ENCODE measurements at regions of chr13 and their contacts with region 1.

Region 1: GRCh38 chr13:27620377-27621115 is at the start of gene LNX2:
- DNase-seq: peak; percentile 95
- ATAC-seq: peak; percentile 96
- H3K4me3 ChIP-seq: peak within 1 kb of the TSS; percentile 99
- H3K27ac ChIP-seq: peak within 1 kb of the TSS; percentile 61
- H3K4me1 ChIP-seq: no peaks in the 10 kb centered on the region
- H3K27me3 ChIP-seq: no peaks in the 10 kb centered on the region
- CTCF ChIP-seq: no peak
- POLR2A ChIP-seq: no peak
- RAD21 ChIP-seq: no peak
- total RNA-seq, gene LNX2: 7.2 and 7.8 TPM in 2 replicates

Region 2: DNA sequence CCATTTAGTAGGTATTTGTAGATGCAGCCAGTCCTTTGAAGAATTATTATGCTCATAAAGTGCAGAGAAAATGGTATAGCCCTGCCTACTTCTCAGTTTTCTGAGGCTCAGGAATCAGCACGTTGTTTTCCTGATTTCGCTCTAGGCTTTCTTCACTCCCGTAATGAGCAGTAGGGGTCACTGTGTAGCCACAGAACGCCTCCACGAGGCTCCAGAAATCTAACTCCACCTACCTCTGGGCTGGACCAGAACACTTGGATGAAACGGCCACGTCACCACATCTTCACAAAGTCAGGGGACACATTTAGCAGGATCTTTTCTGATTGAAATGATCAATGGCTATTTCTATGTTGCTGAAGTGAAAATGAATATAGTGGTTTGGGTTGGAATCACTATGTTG is 245.9 kb before region 1 on chr13:
- CTCF ChIA-PET with region 1: no interaction called
- POLR2A ChIA-PET with region 1: no interaction called
- dilution Hi-C with region 1: no loop called
- in situ Hi-C with region 1: no loop called
- intact Hi-C with region 1: loop called (anchors 10 kb)
- DNase-seq: peak; percentile 88
- ATAC-seq: peak; percentile 98
- H3K4me3 ChIP-seq: no peak overlapping the region
- H3K27ac ChIP-seq: no peak overlapping the region
- H3K4me1 ChIP-seq: no peaks in the 10 kb centered on the region
- H3K27me3 ChIP-seq: peaks cover 22% of the 10 kb centered on the region
- CTCF ChIP-seq: peak; percentile 89
- POLR2A ChIP-seq: no peak
- RAD21 ChIP-seq: peak; percentile 82

Region 3: DNA sequence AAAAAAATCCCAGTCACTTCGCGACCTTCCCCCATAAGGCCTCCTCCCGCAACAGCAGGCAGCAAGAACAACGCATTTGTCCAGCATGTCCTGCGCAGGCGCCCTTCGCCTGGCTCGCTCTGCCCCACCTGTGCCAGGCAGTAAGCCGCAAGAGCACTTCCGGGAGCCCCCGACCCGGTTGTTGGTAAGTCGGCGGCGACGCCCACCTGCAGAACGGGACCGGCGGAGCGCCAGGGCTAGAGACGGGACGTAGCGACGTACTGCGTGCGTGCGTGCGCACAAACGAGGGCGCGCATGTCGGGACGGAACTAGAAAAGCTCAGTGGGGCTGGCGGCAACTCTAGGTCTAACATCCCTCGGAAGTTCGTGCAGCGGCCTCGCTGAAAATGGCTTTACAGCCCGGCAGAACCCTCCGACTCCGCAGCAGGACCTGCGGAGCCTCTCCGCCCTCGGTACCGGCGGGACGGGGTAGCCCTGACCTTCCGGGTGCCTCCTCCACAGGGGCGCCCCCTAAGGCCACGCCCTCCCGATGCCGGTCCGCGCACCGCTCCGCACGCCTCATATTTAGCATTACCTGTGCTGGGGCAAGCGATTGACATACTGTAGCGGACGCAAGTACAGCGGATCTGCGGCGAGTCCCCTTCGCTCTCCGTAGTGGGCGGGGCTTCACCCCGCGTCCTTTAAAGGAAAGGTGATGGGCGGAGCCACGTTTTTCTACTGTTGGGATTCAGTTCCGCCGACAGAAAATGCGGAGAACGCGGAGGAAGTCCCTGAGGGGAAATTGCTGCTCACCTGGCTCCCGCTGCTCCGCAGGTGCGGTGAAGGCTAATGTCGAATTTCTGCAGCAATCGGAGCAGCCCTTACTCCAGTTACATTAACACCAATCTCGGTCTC is 170.4 kb before region 1 on chr13 and contains the start of gene MTIF3:
- CTCF ChIA-PET with region 1: no interaction called
- POLR2A ChIA-PET with region 1: no interaction called
- dilution Hi-C with region 1: no loop called
- in situ Hi-C with region 1: no loop called
- intact Hi-C with region 1: loop called (anchors 1 kb)
- DNase-seq: peak; percentile 90
- ATAC-seq: peak; percentile 96
- H3K4me3 ChIP-seq: peak within 1 kb of the TSS; percentile 74
- H3K27ac ChIP-seq: peak within 1 kb of the TSS; percentile 89
- H3K4me1 ChIP-seq: peaks cover 4% of the 10 kb centered on the region
- H3K27me3 ChIP-seq: no peaks in the 10 kb centered on the region
- CTCF ChIP-seq: no peak
- POLR2A ChIP-seq: peak; percentile 56
- RAD21 ChIP-seq: no peak
- total RNA-seq, gene MTIF3: 31.7 and 60.8 TPM in 2 replicates

Region 4: DNA sequence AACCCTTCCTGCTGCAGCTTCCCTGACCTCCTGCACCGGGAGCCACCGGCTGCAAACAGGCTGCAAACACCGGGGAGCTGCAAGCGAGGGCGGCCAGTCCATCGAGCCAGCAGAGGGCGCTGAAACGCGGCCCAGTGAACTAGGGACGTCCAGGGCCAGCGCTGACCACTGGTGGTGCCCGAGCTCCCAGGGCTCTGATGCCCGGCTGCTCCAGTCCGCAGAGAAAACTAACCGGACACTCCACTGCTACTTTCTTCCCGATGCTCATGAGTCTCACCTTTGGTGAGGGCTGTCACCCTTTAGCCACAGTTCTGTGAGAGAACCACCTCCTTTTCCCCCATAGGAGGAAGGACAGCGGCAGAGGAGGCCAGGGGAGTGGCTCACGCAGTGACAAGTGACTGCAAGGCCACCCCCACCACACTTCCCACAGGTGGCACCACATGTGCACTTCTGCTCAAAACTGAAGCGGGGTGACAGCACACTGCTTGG is 87.3 kb before region 1 on chr13:
- CTCF ChIA-PET with region 1: interaction called, 10 read pairs
- POLR2A ChIA-PET with region 1: no interaction called
- dilution Hi-C with region 1: no loop called
- in situ Hi-C with region 1: no loop called
- intact Hi-C with region 1: loop called (anchors 1 kb)
- DNase-seq: peak; percentile 59
- ATAC-seq: peak; percentile 100
- H3K4me3 ChIP-seq: no peak overlapping the region
- H3K27ac ChIP-seq: no peak overlapping the region
- H3K4me1 ChIP-seq: no peaks in the 10 kb centered on the region
- H3K27me3 ChIP-seq: peaks cover 4% of the 10 kb centered on the region
- CTCF ChIP-seq: peak; percentile 94
- POLR2A ChIP-seq: 0 out of 2 replicates have a peak, but pooled peaks have one; percentile 32
- RAD21 ChIP-seq: peak; percentile 84

Region 5: DNA sequence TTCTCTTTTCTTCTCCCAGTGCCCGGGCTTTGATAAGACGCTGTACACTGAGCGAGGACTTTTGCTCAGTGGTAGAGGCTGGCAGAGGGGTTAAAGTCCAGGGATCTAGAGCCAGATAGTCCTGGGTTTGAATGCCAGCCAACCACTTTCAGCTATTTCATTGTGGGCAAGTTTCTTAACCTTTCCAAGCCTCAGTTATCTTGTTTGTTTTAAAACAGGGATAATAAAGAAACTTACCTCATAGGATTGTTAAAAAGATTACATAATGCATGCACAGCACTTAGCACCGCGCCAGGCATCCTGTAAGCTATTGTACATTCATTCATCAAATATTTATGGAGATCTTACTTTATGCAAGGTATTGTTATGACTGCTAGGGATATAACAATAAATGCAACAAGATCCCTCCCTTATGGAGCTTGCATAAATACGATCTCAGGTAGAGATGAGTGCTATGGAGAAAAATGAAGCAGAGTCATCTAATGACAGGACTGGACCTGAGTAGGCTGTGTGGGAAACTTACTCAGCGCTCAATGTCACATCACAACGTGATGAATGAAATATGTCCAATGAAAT is 71.1 kb before region 1 on chr13:
- CTCF ChIA-PET with region 1: no interaction called
- POLR2A ChIA-PET with region 1: no interaction called
- dilution Hi-C with region 1: no loop called
- in situ Hi-C with region 1: no loop called
- intact Hi-C with region 1: no loop called
- DNase-seq: no peak
- ATAC-seq: no peak
- H3K4me3 ChIP-seq: no peak overlapping the region
- H3K27ac ChIP-seq: no peak overlapping the region
- H3K4me1 ChIP-seq: no peaks in the 10 kb centered on the region
- H3K27me3 ChIP-seq: no peaks in the 10 kb centered on the region
- CTCF ChIP-seq: no peak
- POLR2A ChIP-seq: no peak
- RAD21 ChIP-seq: no peak

Region 6: GRCh38 chr13:27588405-27588804 is 32.1 kb before region 1 on chr13:
- CTCF ChIA-PET with region 1: no interaction called
- POLR2A ChIA-PET with region 1: no interaction called
- dilution Hi-C with region 1: no loop called
- in situ Hi-C with region 1: no loop called
- intact Hi-C with region 1: loop called (anchors 1 kb)
- DNase-seq: no peak
- ATAC-seq: no peak
- H3K4me3 ChIP-seq: no peak overlapping the region
- H3K27ac ChIP-seq: no peak overlapping the region
- H3K4me1 ChIP-seq: peaks cover 3% of the 10 kb centered on the region
- H3K27me3 ChIP-seq: no peaks in the 10 kb centered on the region
- CTCF ChIP-seq: no peak
- POLR2A ChIP-seq: no peak
- RAD21 ChIP-seq: no peak

Region 7: DNA sequence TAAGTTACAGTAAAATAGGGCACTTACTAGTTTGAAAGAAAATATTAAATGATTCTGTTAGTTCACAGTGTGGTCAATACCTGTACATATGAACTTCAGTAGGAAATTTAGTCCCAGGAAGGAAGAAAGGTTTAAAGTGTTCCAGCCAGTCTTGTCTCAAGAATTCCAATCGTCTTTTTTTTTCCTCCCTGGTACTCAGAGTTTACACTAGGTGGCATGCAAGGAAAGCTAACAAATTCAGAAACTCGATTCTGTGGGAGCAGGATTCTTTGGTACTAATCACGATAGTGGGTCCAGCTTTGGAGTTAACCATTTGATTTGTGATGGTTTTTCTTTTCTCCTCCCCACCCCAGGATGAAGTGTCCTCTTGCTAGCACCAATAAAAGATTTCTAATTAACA is 44.8 kb after region 1 on chr13:
- CTCF ChIA-PET with region 1: no interaction called
- POLR2A ChIA-PET with region 1: no interaction called
- dilution Hi-C with region 1: no loop called
- in situ Hi-C with region 1: no loop called
- intact Hi-C with region 1: loop called (anchors 2 kb)
- DNase-seq: peak; percentile 20
- ATAC-seq: no peak; the same call in 1 of the 2 replicates
- H3K4me3 ChIP-seq: no peak overlapping the region
- H3K27ac ChIP-seq: no peak overlapping the region
- H3K4me1 ChIP-seq: no peaks in the 10 kb centered on the region
- H3K27me3 ChIP-seq: no peaks in the 10 kb centered on the region
- CTCF ChIP-seq: no peak; the same call in 1 of the 2 replicates
- POLR2A ChIP-seq: no peak
- RAD21 ChIP-seq: peak; percentile 29; the same call in 1 of the 2 replicates

Region 8: DNA sequence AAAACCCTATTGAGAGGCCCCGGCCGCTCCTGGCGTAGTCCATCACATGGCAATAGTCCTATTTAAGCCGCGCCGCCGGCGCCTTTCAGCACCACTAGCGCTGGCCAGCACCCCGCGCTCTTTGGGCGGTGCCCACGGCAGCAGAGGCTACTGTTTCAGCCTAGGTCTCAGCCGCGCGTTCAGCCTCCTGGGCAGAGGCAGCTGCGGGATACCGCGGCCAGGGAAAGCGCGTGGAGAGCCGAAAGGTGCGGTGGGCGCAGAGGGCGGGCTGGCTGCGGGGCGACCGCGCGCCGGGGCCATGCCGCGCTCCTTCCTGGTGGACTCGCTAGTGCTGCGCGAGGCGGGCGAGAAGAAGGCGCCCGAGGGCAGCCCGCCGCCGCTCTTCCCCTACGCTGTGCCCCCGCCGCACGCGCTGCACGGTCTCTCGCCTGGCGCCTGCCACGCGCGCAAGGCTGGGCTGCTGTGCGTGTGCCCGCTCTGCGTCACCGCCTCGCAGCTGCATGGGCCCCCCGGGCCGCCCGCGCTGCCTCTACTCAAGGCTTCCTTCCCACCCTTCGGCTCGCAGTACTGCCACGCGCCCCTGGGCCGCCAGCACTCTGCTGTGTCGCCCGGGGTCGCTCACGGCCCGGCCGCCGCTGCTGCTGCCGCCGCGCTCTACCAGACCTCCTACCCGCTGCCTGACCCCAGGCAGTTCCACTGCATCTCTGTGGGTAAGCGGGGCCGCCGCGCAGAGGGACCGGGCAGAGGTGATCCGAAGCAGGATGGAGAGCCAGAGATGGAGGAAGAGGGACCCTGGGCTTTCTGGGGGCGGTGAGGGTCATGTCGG is 172.1 kb after region 1 on chr13 and contains the start of gene GSX1:
- CTCF ChIA-PET with region 1: no interaction called
- POLR2A ChIA-PET with region 1: no interaction called
- dilution Hi-C with region 1: no loop called
- in situ Hi-C with region 1: no loop called
- intact Hi-C with region 1: loop called (anchors 2 kb)
- DNase-seq: peak; percentile 63
- ATAC-seq: peak; percentile 97
- H3K4me3 ChIP-seq: no peak within 1 kb of the TSS
- H3K27ac ChIP-seq: no peak within 1 kb of the TSS
- H3K4me1 ChIP-seq: no peaks in the 10 kb centered on the region; the same call in 1 of the 2 replicates
- H3K27me3 ChIP-seq: peaks cover 89% of the 10 kb centered on the region
- CTCF ChIP-seq: no peak
- POLR2A ChIP-seq: no peak
- RAD21 ChIP-seq: no peak
- total RNA-seq, gene GSX1: not detected in 2 replicates